ENCODE measurements at regions of chr11 and their contacts with region 1.

Region 1: DNA sequence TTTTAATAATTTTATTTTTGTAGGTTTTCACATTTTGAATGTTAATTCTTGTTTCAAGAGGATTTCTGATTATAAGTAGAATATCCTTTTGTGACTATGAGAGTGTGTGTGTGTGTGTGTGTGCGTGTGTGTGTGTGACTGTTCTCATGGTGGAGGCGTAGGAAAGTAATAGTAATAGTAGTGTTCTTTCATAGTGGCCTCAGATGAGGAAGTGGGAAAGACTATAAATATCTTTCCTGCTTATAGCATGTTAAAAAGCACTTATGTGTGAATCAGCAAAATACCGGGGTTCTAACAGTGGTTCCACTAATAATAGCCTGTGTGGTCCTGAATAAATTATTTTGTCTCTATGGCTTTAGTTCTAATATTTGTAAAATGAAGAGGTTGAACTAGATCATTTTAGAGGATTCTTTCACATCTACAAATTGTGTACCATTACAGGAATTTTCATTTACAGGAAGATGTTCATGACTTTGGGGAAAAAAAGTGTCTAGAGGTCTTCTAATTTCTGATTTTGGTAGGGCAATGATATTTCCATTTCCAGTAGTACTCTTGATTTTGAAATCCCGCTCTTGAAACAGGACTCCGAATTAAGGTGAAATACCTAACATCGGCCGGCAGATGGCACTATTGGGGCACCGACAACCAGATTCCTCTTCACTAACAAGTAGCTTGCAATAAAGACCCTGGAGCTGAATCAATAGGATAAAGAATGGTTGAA is 29.9 kb upstream of the OR10G7 start:
- DNase-seq: peak; percentile 78
- ATAC-seq: peak; percentile 50; the same call in 1 of the 2 replicates
- H3K4me3 ChIP-seq: no peak overlapping the region
- H3K27ac ChIP-seq: no peak overlapping the region
- H3K4me1 ChIP-seq: no peaks in the 10 kb centered on the region
- H3K27me3 ChIP-seq: peaks cover 14% of the 10 kb centered on the region
- CTCF ChIP-seq: peak; percentile 75
- POLR2A ChIP-seq: no peak
- RAD21 ChIP-seq: peak; percentile 71

Region 2: GRCh38 chr11:123640677-123641494 is 430.2 kb before region 1 on chr11:
- CTCF ChIA-PET with region 1: no interaction called
- POLR2A ChIA-PET with region 1: no interaction called
- dilution Hi-C with region 1: no loop called
- in situ Hi-C with region 1: no loop called
- intact Hi-C with region 1: loop called (anchors 10 kb)
- DNase-seq: peak; percentile 17
- ATAC-seq: peak; percentile 98
- H3K4me3 ChIP-seq: no peak overlapping the region
- H3K27ac ChIP-seq: no peak overlapping the region
- H3K4me1 ChIP-seq: no peaks in the 10 kb centered on the region
- H3K27me3 ChIP-seq: peaks cover 46% of the 10 kb centered on the region
- CTCF ChIP-seq: peak; percentile 75
- POLR2A ChIP-seq: no peak
- RAD21 ChIP-seq: peak; percentile 81

Region 3: DNA sequence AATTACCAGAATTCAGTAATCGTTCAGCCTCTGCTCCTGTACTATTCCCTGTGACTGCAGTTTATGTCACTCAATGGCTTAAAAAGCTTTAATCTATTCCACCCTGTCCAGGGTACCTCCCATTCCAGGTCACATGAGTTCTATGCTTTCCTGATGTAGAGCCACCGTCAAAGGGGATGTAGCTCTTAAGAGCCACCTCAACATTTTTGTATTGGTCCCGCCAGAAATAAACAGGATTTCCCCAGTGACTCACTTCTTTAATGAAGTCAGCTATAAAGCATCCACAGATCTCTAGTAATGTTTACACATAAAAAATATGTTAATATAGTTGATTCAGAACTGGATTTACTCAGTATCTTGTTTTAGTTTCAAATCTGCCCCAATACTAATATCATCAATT is 244.0 kb after region 1 on chr11:
- CTCF ChIA-PET with region 1: no interaction called
- POLR2A ChIA-PET with region 1: no interaction called
- dilution Hi-C with region 1: no loop called
- in situ Hi-C with region 1: loop called (anchors 10 kb)
- intact Hi-C with region 1: no loop called
- DNase-seq: peak; percentile 80
- ATAC-seq: peak; percentile 82
- H3K4me3 ChIP-seq: no peak overlapping the region
- H3K27ac ChIP-seq: no peak overlapping the region
- H3K4me1 ChIP-seq: peaks cover 2% of the 10 kb centered on the region; the same call in 1 of the 2 replicates
- H3K27me3 ChIP-seq: no peaks in the 10 kb centered on the region
- CTCF ChIP-seq: no peak
- POLR2A ChIP-seq: no peak
- RAD21 ChIP-seq: no peak

Region 4: GRCh38 chr11:124402326-124402922 is 331.3 kb after region 1 on chr11:
- CTCF ChIA-PET with region 1: no interaction called
- POLR2A ChIA-PET with region 1: no interaction called
- dilution Hi-C with region 1: no loop called
- in situ Hi-C with region 1: no loop called
- intact Hi-C with region 1: loop called (anchors 5 kb)
- DNase-seq: peak; percentile 86
- ATAC-seq: peak; percentile 95
- H3K4me3 ChIP-seq: no peak overlapping the region
- H3K27ac ChIP-seq: no peak overlapping the region
- H3K4me1 ChIP-seq: peaks cover 3% of the 10 kb centered on the region; the same call in 1 of the 2 replicates
- H3K27me3 ChIP-seq: no peaks in the 10 kb centered on the region; the same call in 1 of the 2 replicates
- CTCF ChIP-seq: peak; percentile 86
- POLR2A ChIP-seq: no peak
- RAD21 ChIP-seq: peak; percentile 63

Region 5: GRCh38 chr11:124865921-124866583 is 795.0 kb after region 1 on chr11:
- CTCF ChIA-PET with region 1: no interaction called
- POLR2A ChIA-PET with region 1: no interaction called
- dilution Hi-C with region 1: no loop called
- in situ Hi-C with region 1: no loop called
- intact Hi-C with region 1: loop called (anchors 10 kb)
- DNase-seq: peak; percentile 15
- ATAC-seq: peak; percentile 56
- H3K4me3 ChIP-seq: peak overlapping the region; percentile 20; the same call in 1 of the 2 replicates
- H3K27ac ChIP-seq: no peak overlapping the region
- H3K4me1 ChIP-seq: peaks cover 2% of the 10 kb centered on the region
- H3K27me3 ChIP-seq: peaks cover 97% of the 10 kb centered on the region
- CTCF ChIP-seq: peak; percentile 69
- POLR2A ChIP-seq: no peak
- RAD21 ChIP-seq: peak; percentile 42; the same call in 1 of the 2 replicates

Region 6: GRCh38 chr11:125670172-125670571 is 1599.1 kb after region 1 on chr11:
- CTCF ChIA-PET with region 1: no interaction called
- POLR2A ChIA-PET with region 1: no interaction called
- dilution Hi-C with region 1: no loop called
- in situ Hi-C with region 1: no loop called
- intact Hi-C with region 1: no loop called
- DNase-seq: no peak
- ATAC-seq: no peak
- H3K4me3 ChIP-seq: no peak overlapping the region
- H3K27ac ChIP-seq: no peak overlapping the region
- H3K4me1 ChIP-seq: peaks cover 11% of the 10 kb centered on the region
- H3K27me3 ChIP-seq: no peaks in the 10 kb centered on the region
- CTCF ChIP-seq: no peak
- POLR2A ChIP-seq: no peak
- RAD21 ChIP-seq: no peak